Activated CD8-positive, alpha-beta T cell treated with anti-CD3 and anti-CD28 coated beads, Interleukin-2, amount 10 ng/mL, durations not matched to agents 7 days and 5 days (primary cell): ENCODE measurements at regions of chr2 and their contacts with region 1.

Region 1: DNA sequence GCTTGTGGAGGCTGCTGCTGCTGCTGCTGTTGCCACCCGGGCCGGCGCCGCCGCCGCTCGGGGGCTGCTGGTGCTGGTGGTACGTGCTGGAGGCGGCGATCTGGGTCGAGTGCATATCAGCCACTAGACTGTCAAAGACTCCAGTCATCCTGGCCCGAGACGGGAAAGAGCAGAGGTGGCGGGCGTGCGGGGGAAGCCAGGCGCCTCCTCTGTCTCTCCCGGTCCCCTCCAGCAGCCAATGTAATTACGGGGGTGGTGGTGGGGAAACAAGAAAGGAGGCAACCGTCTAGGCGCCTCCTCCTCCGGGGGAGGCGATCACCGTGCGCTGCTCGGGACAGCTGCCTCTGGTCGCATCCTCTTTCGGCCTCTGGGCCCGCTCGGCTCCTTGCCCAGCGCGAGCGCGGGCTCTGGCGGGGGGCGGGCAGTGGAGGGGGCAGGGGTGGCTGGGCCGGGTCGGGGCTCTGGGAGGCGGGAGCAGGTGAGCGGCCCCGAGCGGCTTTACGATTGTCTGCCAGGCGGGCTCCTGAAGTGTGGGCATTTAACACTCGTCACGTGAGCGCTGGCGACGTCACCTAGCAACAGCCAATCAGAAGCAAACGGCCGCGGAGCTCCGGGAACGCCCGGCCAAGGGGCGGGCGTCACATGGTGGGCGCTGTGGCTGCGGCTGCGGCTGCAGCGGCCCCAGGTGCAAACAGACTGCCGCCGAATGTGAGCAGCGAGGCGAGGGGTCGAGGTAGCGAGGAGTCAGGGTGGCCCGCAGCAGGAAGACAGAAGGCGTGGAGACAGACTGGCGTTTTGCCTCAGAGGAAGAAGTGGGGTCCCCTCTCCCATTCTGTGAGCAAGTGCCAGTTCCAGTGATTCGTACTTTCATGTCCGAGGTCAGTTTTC is at the start of gene DLX2:
- DNase-seq: peak; percentile 83
- ATAC-seq: peak; percentile 56
- H3K4me3 Mint-ChIP-seq: peak within 1 kb of the TSS; percentile 77
- H3K27ac Mint-ChIP-seq: peak within 1 kb of the TSS; percentile 73
- H3K4me1 Mint-ChIP-seq: peaks cover 60% of the 10 kb centered on the region
- H3K27me3 Mint-ChIP-seq: peaks cover 65% of the 10 kb centered on the region
- total RNA-seq, gene DLX2: not detected

Region 2: DNA sequence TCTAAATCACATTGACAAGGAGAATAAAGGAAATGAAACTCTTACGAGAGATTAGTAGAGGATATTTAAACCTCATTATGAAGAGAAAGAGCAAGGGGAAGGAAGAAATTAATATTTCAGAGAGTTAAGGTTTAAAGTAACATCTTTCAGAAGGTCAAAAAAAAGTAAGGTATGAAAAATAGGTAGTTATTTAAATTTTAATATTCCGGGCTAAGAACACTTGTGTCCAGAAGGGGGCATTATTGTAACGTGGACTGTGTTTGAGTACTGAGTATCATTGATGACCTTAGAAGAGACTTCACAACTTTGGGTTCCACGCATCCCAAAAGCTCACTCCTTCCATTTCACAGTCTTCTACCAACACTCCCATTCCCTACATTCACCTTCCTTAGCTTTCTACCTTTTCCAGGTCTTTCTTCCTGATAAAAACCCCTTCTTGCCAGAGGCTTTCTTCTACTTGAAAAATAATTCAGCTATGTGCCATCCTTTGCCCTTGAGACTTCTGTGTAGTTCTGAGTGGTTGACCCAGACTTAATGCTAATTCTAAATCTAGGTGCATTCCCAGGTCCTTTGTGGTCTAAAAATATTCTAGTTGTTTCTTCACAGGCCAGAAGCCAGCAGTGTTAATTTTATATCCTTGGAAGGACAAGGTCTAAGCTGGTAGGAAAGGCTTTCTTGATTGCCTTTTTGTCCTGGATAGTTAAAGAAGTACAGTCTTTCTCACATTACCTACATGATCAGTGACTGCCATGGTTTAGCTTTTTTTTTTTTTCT is 398.9 kb before region 1 on chr2:
- CTCF ChIA-PET with region 1: interaction called, 143 read pairs
- POLR2A ChIA-PET with region 1: interaction called, 4 read pairs
- DNase-seq: peak; percentile 27
- ATAC-seq: no peak
- H3K4me3 Mint-ChIP-seq: no peak overlapping the region
- H3K27ac Mint-ChIP-seq: no peak overlapping the region
- H3K4me1 Mint-ChIP-seq: peaks cover 1% of the 10 kb centered on the region
- H3K27me3 Mint-ChIP-seq: no peaks in the 10 kb centered on the region

Region 3: DNA sequence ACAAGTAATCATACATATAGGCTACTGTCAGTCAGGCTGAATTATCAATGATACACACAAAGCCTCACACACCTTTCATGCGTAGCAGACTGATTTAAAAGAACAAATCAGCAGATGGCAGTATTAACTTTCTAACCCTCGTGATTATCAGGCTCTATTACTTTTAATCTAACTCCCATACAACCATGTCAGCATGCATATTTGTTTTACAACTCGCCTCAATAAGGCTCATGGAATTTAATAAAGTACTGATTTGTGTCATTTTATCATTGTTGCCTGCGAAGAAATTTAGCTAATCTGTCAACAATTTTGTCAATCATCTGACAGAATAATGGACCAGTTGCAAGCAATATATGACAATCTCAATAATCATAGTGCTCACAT is 291.4 kb before region 1 on chr2:
- CTCF ChIA-PET with region 1: interaction called, 25 read pairs
- POLR2A ChIA-PET with region 1: no interaction called
- DNase-seq: no peak
- ATAC-seq: no peak
- H3K4me3 Mint-ChIP-seq: no peak overlapping the region
- H3K27ac Mint-ChIP-seq: no peak overlapping the region
- H3K4me1 Mint-ChIP-seq: no peaks in the 10 kb centered on the region
- H3K27me3 Mint-ChIP-seq: no peaks in the 10 kb centered on the region

Region 4: DNA sequence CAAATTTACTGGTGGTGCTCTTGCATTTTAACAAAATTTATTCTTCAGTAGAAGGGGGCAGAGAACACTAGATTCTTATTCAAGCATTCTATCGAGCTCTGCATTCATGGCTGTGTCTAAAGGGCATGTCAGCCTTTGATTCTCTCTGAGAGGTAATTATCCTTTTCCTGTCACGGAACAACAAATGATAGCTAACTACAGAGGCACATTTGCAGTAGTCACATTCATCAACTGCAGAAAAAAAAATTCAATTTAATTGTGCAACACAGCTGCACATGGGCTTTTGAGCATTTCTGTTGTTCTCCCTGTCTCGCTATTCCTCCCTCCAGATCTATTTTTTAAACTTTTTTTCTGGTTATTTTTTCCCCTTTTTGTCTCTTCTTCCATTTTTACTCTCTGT is 30.3 kb before region 1 on chr2:
- CTCF ChIA-PET with region 1: interaction called, 15 read pairs
- POLR2A ChIA-PET with region 1: no interaction called
- DNase-seq: no peak
- ATAC-seq: no peak
- H3K4me3 Mint-ChIP-seq: no peak overlapping the region
- H3K27ac Mint-ChIP-seq: no peak overlapping the region
- H3K4me1 Mint-ChIP-seq: no peaks in the 10 kb centered on the region
- H3K27me3 Mint-ChIP-seq: peaks cover 13% of the 10 kb centered on the region

Region 5: DNA sequence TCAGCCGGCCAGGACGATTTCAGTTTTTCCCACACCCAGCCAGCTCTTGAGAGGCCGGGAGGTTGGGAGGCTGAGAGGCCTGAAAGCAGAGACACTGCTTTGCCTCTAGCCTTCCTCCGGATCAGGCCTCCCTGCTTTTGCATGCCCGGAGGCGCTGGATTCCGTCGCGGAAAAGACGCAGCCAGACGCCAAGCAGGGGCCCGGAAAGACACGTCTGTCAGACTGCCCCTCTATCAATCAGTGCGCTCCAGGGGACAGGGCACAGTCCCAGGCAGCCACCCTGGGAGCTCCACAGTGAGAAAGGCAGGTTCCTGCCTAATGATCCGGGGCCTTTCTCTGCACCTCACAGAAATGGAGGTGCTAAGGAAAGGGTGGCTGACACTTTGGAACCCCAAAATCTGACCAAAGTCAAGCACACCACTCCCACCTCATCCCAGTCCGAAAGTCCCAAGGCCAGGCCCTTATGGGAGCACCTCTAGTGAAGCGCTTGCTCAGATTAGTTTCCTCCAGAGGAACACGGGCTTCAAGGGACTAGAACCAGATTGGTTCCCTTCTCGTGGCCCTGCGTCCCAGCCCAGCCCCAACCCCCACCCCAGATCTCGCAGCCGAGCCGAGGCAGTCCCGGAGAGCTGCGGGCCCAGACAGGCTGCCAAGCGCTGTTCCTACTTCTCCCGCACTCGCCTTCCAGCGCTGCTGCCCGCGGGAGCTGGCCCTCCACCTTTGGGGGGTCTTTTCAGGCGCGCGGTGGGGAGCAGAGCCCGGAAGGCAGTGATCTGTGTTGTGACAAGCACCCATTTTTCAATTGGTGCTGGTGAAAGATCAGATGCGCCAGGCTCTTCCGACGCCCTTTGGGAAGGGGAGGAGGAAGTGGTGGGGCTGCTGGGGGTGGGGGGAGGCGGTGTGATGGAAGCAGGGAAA is 12.3 kb before region 1 on chr2:
- CTCF ChIA-PET with region 1: interaction called, 51 read pairs
- POLR2A ChIA-PET with region 1: interaction called, 3 read pairs
- DNase-seq: no peak
- ATAC-seq: no peak
- H3K4me3 Mint-ChIP-seq: no peak overlapping the region
- H3K27ac Mint-ChIP-seq: no peak overlapping the region
- H3K4me1 Mint-ChIP-seq: peaks cover 53% of the 10 kb centered on the region
- H3K27me3 Mint-ChIP-seq: peaks cover 87% of the 10 kb centered on the region